ENCODE measurements at regions of chr12 and their contacts with region 1.

Region 1: GRCh38 chr12:55926738-55927587 is 731 bp downstream of the PYM1 start:
- DNase-seq: peak; percentile 91
- H3K4me3 ChIP-seq: peak overlapping the region; percentile 32 to 84 (median 80)
- H3K27ac ChIP-seq: peak overlapping the region; percentile 92 to 99 (median 98)
- H3K4me1 ChIP-seq: peaks cover 29 to 55% (median 45%) of the 10 kb centered on the region in 4 donors
- H3K27me3 ChIP-seq: no peaks in the 10 kb centered on the region
- CTCF ChIP-seq: peak; percentile 64 to 88 (median 73)
- EP300 ChIP-seq: no peak
- POLR2A ChIP-seq: no peak

Region 2: GRCh38 chr12:55728939-55729823 is 197.8 kb before region 1 on chr12 and contains the start of gene CD63:
- in situ Hi-C with region 1: loop called in 2 of 4 experiments (anchors 5 to 10 kb)
- intact Hi-C with region 1: no loop called
- DNase-seq: peak; percentile 92
- H3K4me3 ChIP-seq: peak within 1 kb of the TSS; percentile 87 to 99 (median 92)
- H3K27ac ChIP-seq: peak within 1 kb of the TSS; percentile 96 to 99 (median 98)
- H3K4me1 ChIP-seq: peaks cover 23 to 57% (median 39%) of the 10 kb centered on the region in 4 donors
- H3K27me3 ChIP-seq: no peaks in the 10 kb centered on the region
- CTCF ChIP-seq: peak in 1 of 5 experiments; percentile 23
- EP300 ChIP-seq: peak; percentile 56
- POLR2A ChIP-seq: peak; percentile 81
- total RNA-seq, gene CD63: 427 to 723 (median 581) TPM

Region 3: GRCh38 chr12:55817346-55818139 is 109.4 kb before region 1 on chr12 and contains the starts of genes ORMDL2 and SARNP:
- in situ Hi-C with region 1: loop called in 2 of 4 experiments (anchors 10 to 25 kb)
- intact Hi-C with region 1: no loop called
- DNase-seq: peak; percentile 98
- H3K4me3 ChIP-seq: peak within 1 kb of the TSS; percentile 74 to 87 (median 86)
- H3K27ac ChIP-seq: peak within 1 kb of the TSS; percentile 91 to 97 (median 93)
- H3K4me1 ChIP-seq: peaks cover 19 to 50% (median 29%) of the 10 kb centered on the region in 4 donors
- H3K27me3 ChIP-seq: no peaks in the 10 kb centered on the region
- CTCF ChIP-seq: no peak
- EP300 ChIP-seq: no peak
- POLR2A ChIP-seq: peak; percentile 87
- total RNA-seq, gene ORMDL2: 3.7 to 40.3 (median 21.7) TPM
- total RNA-seq, gene SARNP: 38.0 to 50.7 (median 45.0) TPM

Region 4: DNA sequence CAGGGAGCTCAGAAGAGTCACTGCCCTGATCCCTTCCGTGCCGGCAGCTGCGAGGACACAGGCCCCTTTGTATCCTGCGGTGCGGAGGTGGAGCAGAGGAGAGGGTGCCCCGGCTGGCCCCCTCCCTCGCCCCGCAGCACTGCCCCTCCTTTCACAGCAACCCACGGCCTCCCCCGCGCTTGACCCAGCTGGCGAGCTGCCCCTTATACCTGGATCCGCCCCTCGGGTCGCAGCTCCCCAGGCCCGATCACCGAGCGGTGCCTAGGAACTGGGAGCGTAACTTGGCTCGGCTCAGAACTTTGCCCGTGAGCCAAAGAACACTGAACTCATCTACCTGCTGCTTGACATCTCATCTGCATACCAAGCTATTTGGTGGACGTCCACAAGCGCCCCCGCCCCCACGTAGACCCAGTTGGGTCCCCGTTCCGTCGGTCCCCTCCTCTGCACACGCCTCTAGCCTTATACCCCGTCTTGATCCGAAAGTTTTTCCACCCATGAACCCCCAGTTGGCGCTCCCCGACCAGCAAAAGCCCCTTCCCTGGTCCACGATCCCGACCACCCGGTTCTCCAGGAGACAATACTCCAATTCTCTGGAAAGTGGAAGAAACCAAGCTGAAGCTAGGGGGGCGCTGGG is 96.9 kb before region 1 on chr12:
- in situ Hi-C with region 1: no loop called
- intact Hi-C with region 1: loop called (anchors 5 kb)
- DNase-seq: peak; percentile 64
- H3K4me3 ChIP-seq: peak overlapping the region; percentile 62 to 85 (median 82)
- H3K27ac ChIP-seq: peak overlapping the region; percentile 95 to 97 (median 96)
- H3K4me1 ChIP-seq: peaks cover 6 to 52% (median 36%) of the 10 kb centered on the region in 4 donors
- H3K27me3 ChIP-seq: no peaks in the 10 kb centered on the region
- CTCF ChIP-seq: no peak
- EP300 ChIP-seq: no peak
- POLR2A ChIP-seq: peak; percentile 34

Measured in transverse colon (tissue), 4 donors.